IMR-90 (cell line): ENCODE measurements at regions of chr1 and their contacts with region 1.

Region 1: GRCh38 chr1:183101841-183102276 is 78.6 kb downstream of the LAMC1 start:
- DNase-seq: no peak
- ATAC-seq: no peak
- H3K4me3 ChIP-seq: no peak overlapping the region
- H3K27ac ChIP-seq: no peak overlapping the region
- H3K4me1 ChIP-seq: peaks cover 33% of the 10 kb centered on the region
- H3K27me3 ChIP-seq: no peaks in the 10 kb centered on the region
- CTCF ChIP-seq: no peak
- POLR2A ChIP-seq: no peak
- RAD21 ChIP-seq: no peak

Region 2: GRCh38 chr1:183039985-183040447 is 61.8 kb before region 1 on chr1:
- CTCF ChIA-PET with region 1: no interaction called
- POLR2A ChIA-PET with region 1: no interaction called
- dilution Hi-C with region 1: no loop called
- in situ Hi-C with region 1: no loop called
- intact Hi-C with region 1: loop called (anchors 2 kb)
- DNase-seq: peak; percentile 88
- ATAC-seq: peak; percentile 50
- H3K4me3 ChIP-seq: no peak overlapping the region
- H3K27ac ChIP-seq: no peak overlapping the region
- H3K4me1 ChIP-seq: peaks cover 26% of the 10 kb centered on the region
- H3K27me3 ChIP-seq: no peaks in the 10 kb centered on the region
- CTCF ChIP-seq: no peak
- POLR2A ChIP-seq: no peak
- RAD21 ChIP-seq: 0 out of 2 replicates have a peak, but pooled peaks have one; percentile 13

Region 3: DNA sequence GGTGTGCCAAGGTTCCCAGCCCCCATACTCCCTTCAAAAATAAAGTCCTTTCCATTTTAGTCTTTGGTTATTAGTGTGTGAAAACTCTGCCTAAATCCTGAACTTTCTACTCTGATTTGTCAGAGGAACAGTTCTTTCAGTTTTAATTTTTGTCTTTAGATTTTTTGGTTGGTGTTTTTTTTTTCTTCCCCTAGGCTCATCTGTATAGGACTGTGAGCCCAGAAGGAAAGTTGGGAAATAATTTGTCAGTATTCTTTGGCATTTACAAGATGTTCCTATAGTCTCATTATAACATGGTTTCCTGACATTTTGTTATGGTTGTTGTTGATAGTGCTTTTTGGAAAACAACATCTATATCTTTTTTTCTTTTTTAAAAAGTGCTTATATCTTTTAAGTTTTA is 40.7 kb before region 1 on chr1:
- CTCF ChIA-PET with region 1: no interaction called
- POLR2A ChIA-PET with region 1: no interaction called
- dilution Hi-C with region 1: no loop called
- in situ Hi-C with region 1: no loop called
- intact Hi-C with region 1: loop called (anchors 5 kb)
- DNase-seq: no peak
- ATAC-seq: no peak
- H3K4me3 ChIP-seq: no peak overlapping the region
- H3K27ac ChIP-seq: no peak overlapping the region
- H3K4me1 ChIP-seq: peaks cover 16% of the 10 kb centered on the region
- H3K27me3 ChIP-seq: no peaks in the 10 kb centered on the region
- CTCF ChIP-seq: no peak
- POLR2A ChIP-seq: no peak
- RAD21 ChIP-seq: no peak